ENCODE measurements at regions of chr4 and their contacts with region 1.

Region 1: GRCh38 chr4:170138580-170139194 is 48.9 kb upstream of the AADAT start:
- DNase-seq: peak; percentile 45 to 90 (median 79)
- H3K4me3 ChIP-seq: no peak overlapping the region
- H3K27ac ChIP-seq: no peak overlapping the region
- H3K4me1 ChIP-seq: no peaks in the 10 kb centered on the region
- H3K27me3 ChIP-seq: no peaks in the 10 kb centered on the region
- CTCF ChIP-seq: peak; percentile 47 to 81 (median 64)
- POLR2A ChIP-seq: no peak

Region 2: GRCh38 chr4:169854090-169854489 is 284.6 kb before region 1 on chr4:
- intact Hi-C with region 1: no loop called
- DNase-seq: no peak
- H3K4me3 ChIP-seq: no peak overlapping the region
- H3K27ac ChIP-seq: no peak overlapping the region
- H3K4me1 ChIP-seq: no peaks in the 10 kb centered on the region
- H3K27me3 ChIP-seq: no peaks in the 10 kb centered on the region
- CTCF ChIP-seq: no peak
- POLR2A ChIP-seq: no peak

Region 3: DNA sequence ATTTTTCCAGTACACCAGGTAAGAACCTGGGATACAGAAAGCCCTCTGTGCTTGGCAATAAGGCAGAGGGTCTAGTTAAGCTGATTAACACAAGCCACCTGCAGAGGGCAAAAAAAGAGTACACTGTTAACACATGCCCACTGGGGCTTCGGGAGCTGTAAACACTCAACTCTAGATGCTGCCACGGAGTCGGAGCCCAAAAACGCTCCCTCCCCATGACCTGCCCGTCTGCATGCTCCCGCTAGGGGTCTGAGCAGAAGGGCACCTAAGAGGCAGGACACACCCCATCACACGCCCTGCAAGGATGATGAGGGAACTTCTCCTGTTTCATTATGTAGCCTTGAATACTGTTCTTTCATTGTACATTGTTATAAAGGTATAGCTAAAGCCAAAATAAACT is 666.7 kb after region 1 on chr4:
- intact Hi-C with region 1: no loop called
- DNase-seq: no peak
- H3K4me3 ChIP-seq: no peak overlapping the region
- H3K27ac ChIP-seq: no peak overlapping the region
- H3K4me1 ChIP-seq: no peaks in the 10 kb centered on the region
- H3K27me3 ChIP-seq: no peaks in the 10 kb centered on the region
- CTCF ChIP-seq: no peak
- POLR2A ChIP-seq: no peak

Region 4: GRCh38 chr4:170853422-170854021 is 714.8 kb after region 1 on chr4:
- intact Hi-C with region 1: loop called in 1 of 2 experiments (anchors 5 kb)
- DNase-seq: peak; percentile 16 to 63 (median 44)
- H3K4me3 ChIP-seq: no peak overlapping the region
- H3K27ac ChIP-seq: no peak overlapping the region
- H3K4me1 ChIP-seq: no peaks in the 10 kb centered on the region
- H3K27me3 ChIP-seq: no peaks in the 10 kb centered on the region
- CTCF ChIP-seq: peak; percentile 7 to 64 (median 50)
- POLR2A ChIP-seq: no peak

Measured in adrenal gland (tissue), 19 donors.